GM12878 (cell line): ENCODE measurements at regions of chr15 and their contacts with region 1.

Region 1: GRCh38 chr15:63970621-63971426 is 75.5 kb downstream of the DAPK2 start:
- DNase-seq: peak; percentile 85
- ATAC-seq: peak; percentile 96
- H3K4me3 ChIP-seq: peak overlapping the region; percentile 24
- H3K27ac ChIP-seq: peak overlapping the region; percentile 95
- H3K4me1 ChIP-seq: peaks cover 48% of the 10 kb centered on the region
- H3K27me3 ChIP-seq: no peaks in the 10 kb centered on the region
- CTCF ChIP-seq: no peak
- EP300 ChIP-seq: peak; percentile 46 to 90; a peak in 3 of 4 replicates
- POLR2A ChIP-seq: no peak
- RAD21 ChIP-seq: no peak

Region 2: DNA sequence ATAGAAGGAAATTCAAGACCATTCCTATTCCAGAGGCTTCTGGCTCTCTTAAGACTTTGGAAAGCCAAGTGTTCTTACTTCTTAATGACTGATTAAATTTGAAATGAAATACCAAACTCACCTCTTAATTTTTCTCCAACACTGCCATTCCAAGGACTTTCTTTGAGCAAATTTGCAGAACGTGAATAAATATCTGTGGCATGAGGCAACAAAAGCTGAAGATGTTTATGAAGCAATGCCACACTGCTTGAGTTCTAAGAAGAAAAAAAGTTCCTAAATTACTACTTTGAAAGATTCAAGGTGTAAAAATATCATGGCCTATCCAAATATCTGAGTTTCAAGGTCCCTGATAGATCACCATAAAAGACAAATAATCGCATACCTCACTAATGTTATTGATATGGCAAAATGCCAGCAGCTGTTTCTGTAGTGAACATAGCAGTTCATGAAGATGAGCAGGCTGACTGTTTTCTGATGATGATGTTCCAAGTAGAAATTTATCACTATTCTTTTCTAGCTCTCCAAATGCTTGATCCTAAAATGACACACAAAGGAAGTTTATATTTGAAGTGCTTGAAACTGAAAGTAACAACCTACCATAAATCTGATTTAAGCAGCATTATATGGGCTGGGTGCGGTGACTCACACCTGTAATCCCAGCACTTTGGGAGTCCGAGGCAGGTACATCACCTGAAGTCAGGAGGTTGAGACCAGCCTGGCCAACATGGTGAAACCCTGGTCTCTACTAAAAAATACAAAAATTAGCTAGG is 241.5 kb before region 1 on chr15:
- CTCF ChIA-PET with region 1: no interaction called
- POLR2A ChIA-PET with region 1: no interaction called
- RAD21 ChIA-PET with region 1: no interaction called
- SMC1A ChIA-PET with region 1: no interaction called
- in situ Hi-C with region 1: no loop called
- intact Hi-C with region 1: no loop called
- DNase-seq: no peak
- ATAC-seq: no peak
- H3K4me3 ChIP-seq: no peak overlapping the region
- H3K27ac ChIP-seq: no peak overlapping the region
- H3K4me1 ChIP-seq: no peaks in the 10 kb centered on the region
- H3K27me3 ChIP-seq: no peaks in the 10 kb centered on the region
- CTCF ChIP-seq: no peak
- EP300 ChIP-seq: no peak
- POLR2A ChIP-seq: no peak
- RAD21 ChIP-seq: no peak

Region 3: DNA sequence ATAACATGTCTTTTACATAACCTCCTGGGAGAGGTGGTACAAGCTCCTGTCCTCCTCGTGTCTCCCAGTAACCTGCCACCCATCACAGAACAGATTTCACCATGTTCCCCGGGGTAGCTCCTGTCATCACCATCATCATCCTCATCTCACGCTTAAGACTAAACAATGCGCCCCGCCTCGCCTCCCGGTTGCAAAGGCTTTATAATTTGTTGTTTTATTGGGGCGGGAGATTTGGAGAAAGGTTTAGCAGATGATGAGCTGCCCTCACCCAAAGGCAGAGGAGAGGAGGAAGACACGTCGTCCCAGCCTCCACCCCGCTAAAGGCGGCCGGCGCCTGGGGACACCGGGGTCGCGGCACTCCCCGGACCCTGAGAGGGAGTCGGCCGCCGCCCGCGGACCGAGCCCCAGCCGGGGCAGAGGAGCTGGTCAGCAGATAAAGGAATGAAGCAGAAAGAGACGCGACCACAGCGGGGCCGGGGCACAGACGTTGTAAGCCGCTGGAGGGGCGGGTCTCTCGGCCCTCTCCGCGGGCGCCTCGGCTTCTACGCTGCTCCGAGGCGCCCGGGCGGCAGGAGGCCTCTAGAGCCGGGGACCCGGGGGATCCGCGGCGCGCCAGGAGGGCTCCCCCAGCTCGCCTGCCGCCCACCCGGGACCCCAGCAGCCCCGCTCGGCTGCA is 137.7 kb before region 1 on chr15:
- CTCF ChIA-PET with region 1: no interaction called
- POLR2A ChIA-PET with region 1: no interaction called
- RAD21 ChIA-PET with region 1: interaction called, 7 read pairs
- SMC1A ChIA-PET with region 1: interaction called, 10 read pairs
- in situ Hi-C with region 1: no loop called
- intact Hi-C with region 1: no loop called
- DNase-seq: no peak
- ATAC-seq: peak; percentile 68
- H3K4me3 ChIP-seq: peak overlapping the region; percentile 99
- H3K27ac ChIP-seq: peak overlapping the region; percentile 99
- H3K4me1 ChIP-seq: peaks cover 10% of the 10 kb centered on the region
- H3K27me3 ChIP-seq: no peaks in the 10 kb centered on the region
- CTCF ChIP-seq: no peak
- EP300 ChIP-seq: no peak
- POLR2A ChIP-seq: no peak
- RAD21 ChIP-seq: no peak

Region 4: DNA sequence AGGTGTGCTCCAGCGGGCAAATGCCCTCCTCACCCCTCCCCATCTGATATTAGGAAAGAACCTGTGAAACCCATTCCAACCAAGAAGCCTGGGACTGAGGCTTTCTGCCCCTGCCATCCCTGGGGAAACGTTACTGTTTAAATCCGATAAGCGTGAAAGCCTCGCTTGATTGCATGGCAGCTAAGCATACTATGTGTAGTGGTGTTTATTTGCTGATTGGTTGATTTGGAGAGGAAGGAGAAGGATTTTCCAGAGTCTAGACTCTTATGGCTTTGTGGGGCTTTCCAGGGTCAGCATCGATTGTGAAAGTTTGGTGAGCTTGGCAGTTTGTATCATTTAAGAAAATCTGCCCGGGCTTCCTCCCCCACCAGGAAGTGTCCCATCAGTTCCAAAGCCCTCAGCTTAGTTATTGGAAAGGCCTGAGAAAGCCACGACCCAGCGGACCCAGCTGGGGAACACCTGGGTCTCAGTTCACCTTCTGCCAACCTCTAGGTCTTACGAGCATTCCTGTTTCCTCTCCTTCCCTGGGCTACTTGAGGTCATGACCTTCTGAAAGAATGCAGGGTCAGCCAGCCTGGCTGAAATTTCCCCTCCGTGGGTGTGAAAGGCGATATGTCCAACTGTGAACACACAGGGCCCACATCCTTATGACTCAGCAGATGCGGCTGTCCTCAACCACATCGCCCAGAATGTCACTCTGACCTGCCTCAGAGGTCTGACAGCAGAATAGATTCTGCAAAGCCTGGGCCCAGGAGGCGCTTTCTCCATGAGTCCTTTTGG is 74.3 kb before region 1 on chr15:
- CTCF ChIA-PET with region 1: interaction called, 8 read pairs
- POLR2A ChIA-PET with region 1: interaction called, 7 read pairs
- RAD21 ChIA-PET with region 1: interaction called, 56 read pairs
- SMC1A ChIA-PET with region 1: interaction called, 29 read pairs
- in situ Hi-C with region 1: no loop called
- intact Hi-C with region 1: loop called (anchors 1 kb)
- DNase-seq: peak; percentile 90
- ATAC-seq: peak; percentile 84
- H3K4me3 ChIP-seq: no peak overlapping the region
- H3K27ac ChIP-seq: peak overlapping the region; percentile 84
- H3K4me1 ChIP-seq: peaks cover 59% of the 10 kb centered on the region
- H3K27me3 ChIP-seq: no peaks in the 10 kb centered on the region
- CTCF ChIP-seq: no peak
- EP300 ChIP-seq: peak; percentile 93 to 95
- POLR2A ChIP-seq: no peak
- RAD21 ChIP-seq: no peak

Region 5: DNA sequence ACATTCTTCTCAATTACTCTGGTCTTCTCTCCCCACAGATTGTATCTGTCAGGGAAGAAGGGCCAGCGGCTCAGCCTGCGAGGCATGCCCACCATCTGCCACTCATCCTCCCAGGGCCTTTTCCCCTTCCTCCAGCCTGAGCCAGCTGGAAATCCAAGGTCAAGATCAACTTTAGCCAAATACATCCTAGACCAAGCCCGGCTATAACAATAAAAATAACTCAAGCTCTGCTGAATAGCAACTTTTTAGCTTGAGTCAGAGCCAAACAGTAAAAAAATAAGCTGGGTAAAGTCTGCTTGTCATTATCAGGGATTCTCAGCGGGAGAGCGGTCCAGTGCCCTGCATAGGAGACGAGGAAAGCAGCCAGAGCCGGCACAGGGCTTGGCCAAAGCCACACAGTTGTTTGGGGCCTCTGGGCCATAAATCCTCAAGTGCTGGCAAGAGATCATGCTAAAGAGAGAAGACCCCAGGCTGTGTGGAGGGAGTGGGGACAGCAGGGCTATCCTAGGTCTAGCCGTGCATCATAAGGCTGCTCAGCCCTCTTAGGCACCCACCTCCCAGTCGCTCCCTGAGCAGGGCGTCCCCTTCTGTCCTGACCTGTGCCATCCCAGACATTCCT is 60.9 kb before region 1 on chr15:
- CTCF ChIA-PET with region 1: no interaction called
- POLR2A ChIA-PET with region 1: no interaction called
- RAD21 ChIA-PET with region 1: interaction called, 10 read pairs
- SMC1A ChIA-PET with region 1: interaction called, 7 read pairs
- in situ Hi-C with region 1: no loop called
- intact Hi-C with region 1: no loop called
- DNase-seq: no peak
- ATAC-seq: no peak
- H3K4me3 ChIP-seq: no peak overlapping the region
- H3K27ac ChIP-seq: no peak overlapping the region
- H3K4me1 ChIP-seq: peaks cover 14% of the 10 kb centered on the region
- H3K27me3 ChIP-seq: no peaks in the 10 kb centered on the region
- CTCF ChIP-seq: no peak
- EP300 ChIP-seq: no peak
- POLR2A ChIP-seq: no peak
- RAD21 ChIP-seq: no peak

Region 6: GRCh38 chr15:63920504-63921175 is 50.2 kb before region 1 on chr15:
- CTCF ChIA-PET with region 1: interaction called, 3 read pairs
- POLR2A ChIA-PET with region 1: no interaction called
- RAD21 ChIA-PET with region 1: interaction called, 10 read pairs
- SMC1A ChIA-PET with region 1: interaction called, 3 read pairs
- in situ Hi-C with region 1: no loop called
- intact Hi-C with region 1: no loop called
- DNase-seq: no peak
- ATAC-seq: no peak
- H3K4me3 ChIP-seq: no peak overlapping the region
- H3K27ac ChIP-seq: no peak overlapping the region
- H3K4me1 ChIP-seq: peaks cover 27% of the 10 kb centered on the region
- H3K27me3 ChIP-seq: no peaks in the 10 kb centered on the region
- CTCF ChIP-seq: no peak
- EP300 ChIP-seq: no peak
- POLR2A ChIP-seq: no peak
- RAD21 ChIP-seq: no peak

Region 7: GRCh38 chr15:64398575-64398974 is 427.8 kb after region 1 on chr15:
- CTCF ChIA-PET with region 1: no interaction called
- POLR2A ChIA-PET with region 1: no interaction called
- RAD21 ChIA-PET with region 1: no interaction called
- SMC1A ChIA-PET with region 1: no interaction called
- in situ Hi-C with region 1: no loop called
- intact Hi-C with region 1: no loop called
- DNase-seq: no peak
- ATAC-seq: no peak
- H3K4me3 ChIP-seq: no peak overlapping the region
- H3K27ac ChIP-seq: no peak overlapping the region
- H3K4me1 ChIP-seq: no peaks in the 10 kb centered on the region
- H3K27me3 ChIP-seq: no peaks in the 10 kb centered on the region
- CTCF ChIP-seq: no peak
- EP300 ChIP-seq: no peak
- POLR2A ChIP-seq: no peak
- RAD21 ChIP-seq: no peak